Naive thymus-derived CD4-positive, alpha-beta T cell (primary cell): ENCODE measurements at regions of chr2 and their contacts with region 1.

Region 1: DNA sequence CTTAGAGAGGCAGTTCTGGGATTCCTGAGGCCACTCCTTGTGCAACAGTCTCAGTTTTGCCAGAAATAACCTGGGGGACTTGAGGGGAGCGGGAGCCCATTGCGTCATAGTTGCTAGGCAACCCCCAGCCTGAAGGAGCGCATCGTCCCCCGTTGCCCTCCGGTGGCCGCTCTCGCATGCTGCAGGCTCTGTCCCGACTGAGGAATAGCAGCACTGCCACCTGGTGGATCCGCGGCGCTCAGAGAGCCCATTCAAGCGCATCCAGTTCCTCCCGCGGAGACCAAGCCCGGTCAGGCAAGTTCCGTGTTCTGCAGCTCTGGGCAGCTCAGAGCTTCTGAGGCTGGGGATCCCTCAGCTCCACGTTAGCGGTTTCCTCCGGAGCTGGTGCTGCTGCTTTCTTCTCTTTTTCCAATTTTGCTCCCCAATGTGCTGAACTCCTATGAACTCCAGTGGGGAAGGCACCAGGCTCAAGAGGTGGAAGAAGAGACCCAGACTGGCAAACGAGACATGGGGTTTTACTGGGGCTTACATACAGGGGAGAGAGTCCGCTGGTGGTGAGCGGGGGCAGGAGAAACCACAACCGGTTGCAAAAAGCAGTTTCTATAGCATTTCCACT is 15.1 kb downstream of the SLC4A3 start:
- DNase-seq: peak; percentile 73 to 88 (median 83)
- ATAC-seq: peak; percentile 99
- H3K4me3 ChIP-seq: no peak overlapping the region
- H3K4me3 Mint-ChIP-seq: peak overlapping the region in 1 of 10 donors; percentile 29
- H3K27ac ChIP-seq: no peak overlapping the region
- H3K27ac Mint-ChIP-seq: peak overlapping the region in 3 of 9 donors; percentile 16 to 69 (median 20)
- H3K4me1 ChIP-seq: peaks cover 3 to 4% of the 10 kb centered on the region in 2 donors
- H3K4me1 Mint-ChIP-seq: peaks cover 0 to 15% (median 0%) of the 10 kb centered on the region in 7 donors
- H3K27me3 ChIP-seq: no peaks in the 10 kb centered on the region
- H3K27me3 Mint-ChIP-seq: peaks cover 3 to 29% (median 12%) of the 10 kb centered on the region in 5 donors

Region 2: GRCh38 chr2:219475697-219476651 is 166.6 kb before region 1 on chr2:
- CTCF ChIA-PET with region 1: no interaction called
- POLR2A ChIA-PET with region 1: no interaction called
- intact Hi-C with region 1: loop called in 1 of 2 experiments (anchors 1 kb)
- DNase-seq: peak in 7 of 9 donors; percentile 31 to 67 (median 44)
- ATAC-seq: peak; percentile 77
- H3K4me3 ChIP-seq: no peak overlapping the region
- H3K4me3 Mint-ChIP-seq: no peak overlapping the region
- H3K27ac ChIP-seq: no peak overlapping the region
- H3K27ac Mint-ChIP-seq: no peak overlapping the region
- H3K4me1 ChIP-seq: no peaks in the 10 kb centered on the region
- H3K4me1 Mint-ChIP-seq: peaks cover 4 to 5% (median 4%) of the 10 kb centered on the region in 7 donors
- H3K27me3 ChIP-seq: no peaks in the 10 kb centered on the region
- H3K27me3 Mint-ChIP-seq: peaks cover 0 to 4% (median 0%) of the 10 kb centered on the region in 5 donors

Region 3: GRCh38 chr2:219661197-219661954 is 18.8 kb after region 1 on chr2:
- CTCF ChIA-PET with region 1: no interaction called
- POLR2A ChIA-PET with region 1: no interaction called
- intact Hi-C with region 1: no loop called
- DNase-seq: no peak
- ATAC-seq: no peak
- H3K4me3 ChIP-seq: no peak overlapping the region
- H3K4me3 Mint-ChIP-seq: no peak overlapping the region
- H3K27ac ChIP-seq: no peak overlapping the region
- H3K27ac Mint-ChIP-seq: no peak overlapping the region
- H3K4me1 ChIP-seq: no peaks in the 10 kb centered on the region
- H3K4me1 Mint-ChIP-seq: peaks cover 0 to 2% (median 0%) of the 10 kb centered on the region in 7 donors
- H3K27me3 ChIP-seq: peaks cover 0 to 3% of the 10 kb centered on the region in 2 donors
- H3K27me3 Mint-ChIP-seq: peaks cover 9 to 42% (median 25%) of the 10 kb centered on the region in 5 donors